ENCODE measurements at regions of chr18 and their contacts with region 1.

Region 1: DNA sequence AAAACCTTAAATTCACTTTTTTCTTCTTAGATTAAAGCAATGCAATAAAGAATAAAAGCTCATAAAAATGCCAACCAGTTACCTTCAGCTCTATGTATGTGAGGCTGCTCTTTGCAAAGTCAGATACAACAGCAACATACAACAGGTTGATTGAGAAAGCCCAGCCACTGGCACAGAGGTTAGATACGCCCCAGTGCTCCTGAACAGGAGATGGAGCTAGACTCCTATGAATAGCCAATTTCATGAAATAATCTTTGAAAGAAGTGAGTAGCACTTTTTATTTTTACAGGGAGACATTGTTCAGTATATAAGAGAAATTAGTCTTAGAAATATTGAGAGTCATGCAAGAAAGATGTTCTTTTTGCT is 362.4 kb upstream of the MEX3C start:
- DNase-seq: no peak
- H3K4me3 ChIP-seq: no peak overlapping the region
- H3K27ac ChIP-seq: no peak overlapping the region
- H3K4me1 ChIP-seq: no peaks in the 10 kb centered on the region
- H3K27me3 ChIP-seq: no peaks in the 10 kb centered on the region
- CTCF ChIP-seq: no peak
- EP300 ChIP-seq: no peak
- POLR2A ChIP-seq: no peak

Region 2: GRCh38 chr18:52888014-52888413 is 1328.1 kb after region 1 on chr18:
- in situ Hi-C with region 1: no loop called
- intact Hi-C with region 1: loop called (anchors 10 kb)
- DNase-seq: no peak
- H3K4me3 ChIP-seq: no peak overlapping the region
- H3K27ac ChIP-seq: no peak overlapping the region
- H3K4me1 ChIP-seq: no peaks in the 10 kb centered on the region
- H3K27me3 ChIP-seq: no peaks in the 10 kb centered on the region
- CTCF ChIP-seq: no peak
- EP300 ChIP-seq: no peak
- POLR2A ChIP-seq: no peak

Measured in transverse colon (tissue), 4 donors.